Natural killer cell (primary cell): ENCODE measurements at regions of chr11 and their contacts with region 1.

Region 1: DNA sequence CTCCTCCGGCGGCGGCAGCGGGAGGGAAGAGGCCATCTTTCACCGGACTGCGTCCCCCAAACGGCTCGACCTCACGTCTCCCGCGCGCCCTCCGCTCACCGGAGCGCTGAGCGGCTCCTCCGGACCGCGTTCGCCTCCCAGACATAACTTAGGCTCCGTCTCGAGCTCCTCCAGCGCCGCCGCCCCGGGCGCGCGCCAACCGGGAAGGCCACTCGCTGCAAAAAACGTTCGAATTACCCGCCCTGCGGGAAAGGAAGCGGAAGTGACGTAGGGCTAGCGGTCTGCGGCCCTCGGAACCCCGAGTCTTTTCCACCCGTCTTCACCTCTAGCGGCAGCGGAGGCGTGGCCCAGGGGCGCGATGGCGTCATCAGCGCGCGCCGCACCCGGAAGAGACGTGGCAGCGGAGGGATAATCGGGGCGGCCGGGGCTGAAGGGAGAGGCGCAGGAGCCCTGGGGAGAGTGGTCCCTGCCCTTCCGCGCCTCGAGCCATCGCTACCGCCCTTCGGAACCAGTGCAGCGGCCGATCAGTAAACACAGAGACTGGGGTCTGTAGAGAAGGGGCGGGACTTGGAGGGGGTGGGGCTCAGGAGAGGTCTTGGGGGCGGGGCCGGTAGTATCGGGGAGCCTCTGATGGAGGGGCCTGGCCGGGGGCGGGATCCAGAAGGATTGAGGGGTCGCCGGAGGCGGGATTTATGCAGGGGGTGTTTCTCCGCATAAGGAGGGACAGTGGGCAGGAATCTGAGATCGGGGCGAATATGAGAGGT is at the starts of genes CDCA5 and ZFPL1:
- DNase-seq: peak; percentile 98 to 99
- ATAC-seq: peak; percentile 90 to 93 (median 92)
- H3K4me3 ChIP-seq: peak within 1 kb of the TSS; percentile 81
- H3K4me3 Mint-ChIP-seq: peak within 1 kb of the TSS; percentile 94
- H3K27ac ChIP-seq: peak within 1 kb of the TSS; percentile 96
- H3K27ac Mint-ChIP-seq: peak within 1 kb of the TSS; percentile 98 to 100
- H3K4me1 ChIP-seq: peaks cover 16% of the 10 kb centered on the region
- H3K4me1 Mint-ChIP-seq: peaks cover 27 to 31% of the 10 kb centered on the region in 2 donors
- H3K27me3 ChIP-seq: no peaks in the 10 kb centered on the region
- H3K27me3 Mint-ChIP-seq: no peaks in the 10 kb centered on the region
- CTCF ChIP-seq: no peak
- total RNA-seq, gene CDCA5: 3.3 to 6.8 (median 3.8) TPM
- total RNA-seq, gene ZFPL1: 49.8 to 60.2 (median 50.8) TPM

Region 2: GRCh38 chr11:65095974-65096806 is 12.2 kb after region 1 on chr11 and contains the start of gene VPS51:
- intact Hi-C with region 1: loop called (anchors 1 kb)
- DNase-seq: peak; percentile 79 to 95
- ATAC-seq: peak; percentile 89 to 96 (median 92)
- H3K4me3 ChIP-seq: peak within 1 kb of the TSS; percentile 85
- H3K4me3 Mint-ChIP-seq: peak within 1 kb of the TSS; percentile 92
- H3K27ac ChIP-seq: peak within 1 kb of the TSS; percentile 76
- H3K27ac Mint-ChIP-seq: peak within 1 kb of the TSS; percentile 83 to 92
- H3K4me1 ChIP-seq: peaks cover 19% of the 10 kb centered on the region
- H3K4me1 Mint-ChIP-seq: peaks cover 0 to 14% of the 10 kb centered on the region in 2 donors
- H3K27me3 ChIP-seq: no peaks in the 10 kb centered on the region
- H3K27me3 Mint-ChIP-seq: no peaks in the 10 kb centered on the region
- CTCF ChIP-seq: no peak
- total RNA-seq, gene VPS51: 180 to 197 (median 184) TPM